K562 (cell line): ENCODE measurements at regions of chr19 and their contacts with region 1.

Region 1: GRCh38 chr19:18281082-18282020 is at the start of gene JUND:
- DNase-seq: peak; percentile 84 to 99 (median 92)
- ATAC-seq: peak; percentile 77
- H3K4me3 ChIP-seq: peak within 1 kb of the TSS; percentile 100
- H3K27ac ChIP-seq: peak within 1 kb of the TSS; percentile 100
- H3K4me1 ChIP-seq: peaks cover 21 to 55% of the 10 kb centered on the region in 2 experiments
- H3K27me3 ChIP-seq: no peaks in the 10 kb centered on the region
- CTCF ChIP-seq: peak in 1 of 3 experiments; percentile 14; a peak in 1 of 6 replicates
- EP300 ChIP-seq: 0 out of 2 replicates have a peak, but pooled peaks have one; percentile 36
- POLR2A ChIP-seq: peak; percentile 26
- RAD21 ChIP-seq: 0 out of 4 replicates have a peak, but pooled peaks of 1 of the 2 experiments have one; percentile 19
- polyA plus RNA-seq, gene JUND: 6.4 to 11.8 TPM

Region 2: GRCh38 chr19:18233224-18233825 is 48.0 kb before region 1 on chr19:
- CTCF ChIA-PET with region 1: no interaction called
- POLR2A ChIA-PET with region 1: interaction called, 12 read pairs
- in situ Hi-C with region 1: no loop called
- intact Hi-C with region 1: no loop called
- DNase-seq: peak; percentile 87 to 93 (median 92)
- ATAC-seq: peak; percentile 96
- H3K4me3 ChIP-seq: peak overlapping the region; percentile 28
- H3K27ac ChIP-seq: no peak overlapping the region
- H3K4me1 ChIP-seq: peaks cover 15 to 27% of the 10 kb centered on the region in 2 experiments; a peak in 4 of 5 replicates
- H3K27me3 ChIP-seq: peaks cover 0 to 14% of the 10 kb centered on the region in 2 experiments; a peak in 4 of 5 replicates
- CTCF ChIP-seq: no peak
- EP300 ChIP-seq: no peak
- POLR2A ChIP-seq: no peak
- RAD21 ChIP-seq: no peak

Region 3: DNA sequence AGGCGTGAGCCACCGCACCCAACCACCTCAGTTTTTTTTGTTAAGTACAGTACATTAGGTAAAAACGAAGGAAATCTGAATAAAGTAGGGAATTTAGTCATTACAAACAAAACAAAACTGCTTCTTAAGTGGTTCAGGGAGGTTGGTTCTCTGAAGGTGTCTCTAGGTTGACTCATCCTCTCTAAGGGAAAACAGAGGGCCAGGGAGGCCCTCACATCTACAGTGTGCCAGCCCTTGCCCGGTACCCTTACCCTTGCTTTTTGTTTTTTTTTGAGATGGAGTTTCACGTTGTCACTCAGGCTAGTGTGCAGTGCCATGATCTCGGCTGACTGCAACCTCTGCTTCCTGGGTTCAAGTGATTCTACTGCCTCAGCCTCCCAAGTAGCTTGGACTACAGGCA is 17.2 kb after region 1 on chr19:
- CTCF ChIA-PET with region 1: interaction called, 3 read pairs
- POLR2A ChIA-PET with region 1: interaction called, 113 read pairs
- in situ Hi-C with region 1: no loop called
- intact Hi-C with region 1: no loop called
- DNase-seq: no peak
- ATAC-seq: no peak
- H3K4me3 ChIP-seq: no peak overlapping the region
- H3K27ac ChIP-seq: no peak overlapping the region
- H3K4me1 ChIP-seq: peaks cover 26 to 39% of the 10 kb centered on the region in 2 experiments
- H3K27me3 ChIP-seq: no peaks in the 10 kb centered on the region
- CTCF ChIP-seq: no peak
- EP300 ChIP-seq: no peak
- POLR2A ChIP-seq: no peak
- RAD21 ChIP-seq: no peak

Region 4: DNA sequence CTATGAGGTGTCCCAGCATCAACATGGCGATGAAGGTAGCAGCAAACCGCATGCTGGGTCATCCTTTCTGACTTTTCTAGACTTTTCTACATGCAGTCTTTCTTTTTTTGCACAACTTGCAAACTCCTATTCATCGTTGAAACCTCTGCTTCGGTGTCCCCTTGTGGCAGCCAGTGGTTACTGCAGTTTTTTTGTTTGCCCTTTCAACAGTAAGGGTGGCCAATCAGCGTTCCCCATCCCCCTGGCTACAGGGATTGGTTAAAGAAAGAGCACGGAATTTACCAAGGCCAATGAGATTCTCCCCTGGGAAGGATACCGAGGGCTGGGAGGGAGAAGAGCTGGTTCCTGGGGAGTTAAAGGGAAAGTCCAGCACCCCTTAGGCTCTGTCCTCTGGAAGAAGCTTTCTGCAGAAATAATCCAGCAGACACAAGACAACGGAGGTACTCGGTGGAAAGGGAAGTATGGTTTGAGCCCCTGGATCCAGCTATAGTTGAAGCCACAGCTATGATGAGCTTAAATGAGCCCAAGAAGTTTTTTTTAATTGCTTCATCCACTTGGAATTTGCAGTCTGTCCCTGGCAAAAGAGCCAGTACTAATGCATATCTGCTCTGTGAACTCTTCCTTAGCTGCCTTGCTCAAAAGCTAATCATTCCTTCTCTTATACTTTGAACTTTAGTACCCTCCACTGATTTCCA is 47.1 kb after region 1 on chr19:
- CTCF ChIA-PET with region 1: interaction called, 11 read pairs
- POLR2A ChIA-PET with region 1: interaction called, 122 read pairs
- in situ Hi-C with region 1: loop called (anchors 5 kb)
- intact Hi-C with region 1: loop called (anchors 1 kb)
- DNase-seq: peak; percentile 96 to 99 (median 98)
- ATAC-seq: peak; percentile 100
- H3K4me3 ChIP-seq: peak overlapping the region; percentile 33
- H3K27ac ChIP-seq: peak overlapping the region; percentile 63
- H3K4me1 ChIP-seq: peaks cover 22 to 35% of the 10 kb centered on the region in 2 experiments
- H3K27me3 ChIP-seq: no peaks in the 10 kb centered on the region
- CTCF ChIP-seq: peak; percentile 87 to 97 (median 96)
- EP300 ChIP-seq: no peak
- POLR2A ChIP-seq: no peak; the same call in 1 of the 2 replicates
- RAD21 ChIP-seq: peak; percentile 85 to 87

Region 5: GRCh38 chr19:18379803-18380747 is 98.7 kb after region 1 on chr19:
- CTCF ChIA-PET with region 1: no interaction called
- POLR2A ChIA-PET with region 1: interaction called, 14 read pairs
- in situ Hi-C with region 1: no loop called
- intact Hi-C with region 1: no loop called
- DNase-seq: peak; percentile 45 to 77 (median 54)
- ATAC-seq: peak; percentile 71
- H3K4me3 ChIP-seq: no peak overlapping the region
- H3K27ac ChIP-seq: peak overlapping the region; percentile 66
- H3K4me1 ChIP-seq: peaks cover 47 to 54% of the 10 kb centered on the region in 2 experiments
- H3K27me3 ChIP-seq: no peaks in the 10 kb centered on the region
- CTCF ChIP-seq: no peak
- EP300 ChIP-seq: peak; percentile 60
- POLR2A ChIP-seq: no peak
- RAD21 ChIP-seq: 0 out of 4 replicates have a peak, but pooled peaks of 1 of the 2 experiments have one; percentile 10

Region 6: DNA sequence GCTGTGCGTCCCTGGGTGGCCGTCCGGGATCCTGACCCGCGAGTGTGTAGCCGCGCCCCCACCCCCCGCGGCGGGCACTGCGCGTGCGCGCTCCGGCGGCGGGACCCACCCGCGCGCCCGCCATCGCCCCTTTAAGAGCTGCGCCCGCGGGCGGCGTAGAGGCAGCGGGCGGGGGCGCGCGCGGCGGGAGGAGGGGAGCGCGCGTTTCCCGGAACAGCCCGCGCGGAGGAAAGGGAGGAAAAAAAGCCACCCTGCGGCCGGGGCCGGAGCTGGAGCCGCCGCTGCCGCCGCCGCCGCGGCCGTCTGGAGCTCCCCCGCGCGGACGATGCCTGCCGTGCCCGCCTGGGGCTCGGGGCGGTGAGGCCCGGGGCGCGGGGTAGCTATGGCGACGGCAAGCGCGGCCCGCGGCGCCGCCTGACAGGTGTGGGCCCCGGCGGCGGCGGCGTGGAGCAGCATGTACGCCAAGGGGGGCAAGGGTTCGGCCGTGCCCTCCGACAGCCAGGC is 137.9 kb after region 1 on chr19 and contains the start of gene SSBP4:
- CTCF ChIA-PET with region 1: no interaction called
- POLR2A ChIA-PET with region 1: interaction called, 80 read pairs
- in situ Hi-C with region 1: no loop called
- intact Hi-C with region 1: loop called (anchors 2 kb)
- DNase-seq: peak; percentile 84 to 95 (median 88)
- ATAC-seq: peak; percentile 13
- H3K4me3 ChIP-seq: peak within 1 kb of the TSS; percentile 60
- H3K27ac ChIP-seq: peak within 1 kb of the TSS; percentile 97
- H3K4me1 ChIP-seq: peaks cover 54 to 96% of the 10 kb centered on the region in 2 experiments
- H3K27me3 ChIP-seq: no peaks in the 10 kb centered on the region
- CTCF ChIP-seq: peak; percentile 17 to 95 (median 66); a peak in 4 of 6 replicates
- EP300 ChIP-seq: peak; percentile 63
- POLR2A ChIP-seq: no peak
- RAD21 ChIP-seq: peak in 1 of 2 experiments; percentile 67; a peak in 3 of 4 replicates
- polyA plus RNA-seq, gene SSBP4: 1.1 to 1.9 TPM

Region 7: GRCh38 chr19:18700501-18701249 is 419.3 kb after region 1 on chr19:
- CTCF ChIA-PET with region 1: no interaction called
- POLR2A ChIA-PET with region 1: no interaction called
- in situ Hi-C with region 1: no loop called
- intact Hi-C with region 1: no loop called
- DNase-seq: peak; percentile 84 to 95 (median 90)
- ATAC-seq: peak; percentile 99
- H3K4me3 ChIP-seq: peak overlapping the region; percentile 11; the same call in 1 of the 2 replicates
- H3K27ac ChIP-seq: no peak overlapping the region
- H3K4me1 ChIP-seq: peaks cover 17 to 43% of the 10 kb centered on the region in 2 experiments; a peak in 4 of 5 replicates
- H3K27me3 ChIP-seq: no peaks in the 10 kb centered on the region
- CTCF ChIP-seq: no peak
- EP300 ChIP-seq: peak; percentile 68; the same call in 1 of the 2 replicates
- POLR2A ChIP-seq: no peak
- RAD21 ChIP-seq: no peak